ENCODE measurements at regions of chr2 and their contacts with region 1.

Region 1: DNA sequence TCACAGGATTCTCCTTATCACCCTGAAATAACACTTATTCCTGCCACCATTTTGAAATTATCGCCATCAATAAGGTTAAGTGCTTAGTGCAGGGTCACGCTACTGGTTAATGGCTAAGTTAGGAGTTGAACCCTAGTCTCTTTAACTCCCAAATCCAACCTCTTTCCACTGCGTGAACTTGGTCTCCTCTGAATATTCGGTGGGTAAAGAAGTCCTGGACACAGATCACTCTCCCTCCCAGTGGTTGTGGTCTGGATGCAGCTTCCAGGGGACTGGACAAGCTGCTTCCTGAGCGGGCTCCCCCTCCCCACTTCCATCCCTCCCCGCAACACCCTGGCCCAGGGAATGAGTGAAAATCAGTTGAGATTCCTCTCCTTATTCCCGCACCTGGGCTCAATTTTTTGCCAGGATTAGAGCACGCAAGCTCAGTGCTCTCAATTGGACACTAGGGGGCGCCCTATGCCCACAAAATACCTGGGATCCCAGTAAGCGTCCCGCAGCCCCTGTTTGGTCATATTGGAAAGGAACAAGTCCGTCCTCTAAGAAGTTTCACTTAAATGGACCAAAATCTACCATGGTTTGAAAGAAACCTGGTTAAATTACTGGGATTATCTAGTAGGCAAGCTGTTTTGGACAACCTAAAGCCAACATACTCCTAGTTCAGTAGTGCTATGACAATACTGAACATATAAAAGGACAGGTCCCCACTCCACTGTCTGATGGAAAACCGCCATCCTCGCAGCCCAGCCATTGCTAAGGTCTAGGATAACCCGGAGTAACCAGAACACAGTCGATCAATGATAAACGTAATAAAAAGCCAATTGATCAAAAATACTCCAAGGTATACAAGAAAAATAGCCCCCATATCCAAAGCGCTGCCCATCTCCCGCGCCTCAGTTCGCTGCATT is 40.4 kb downstream of the DHRS9 start:
- DNase-seq: peak; percentile 85
- H3K4me3 Mint-ChIP-seq: no peak overlapping the region
- H3K27ac Mint-ChIP-seq: no peak overlapping the region
- H3K4me1 Mint-ChIP-seq: peaks cover 19% of the 10 kb centered on the region
- H3K27me3 Mint-ChIP-seq: no peaks in the 10 kb centered on the region
- CTCF ChIP-seq: peak; percentile 88

Region 2: GRCh38 chr2:168976034-168976654 is 133.6 kb before region 1 on chr2:
- CTCF ChIA-PET with region 1: no interaction called
- intact Hi-C with region 1: no loop called
- DNase-seq: no peak
- H3K4me3 Mint-ChIP-seq: no peak overlapping the region
- H3K27ac Mint-ChIP-seq: peak overlapping the region; percentile 2
- H3K4me1 Mint-ChIP-seq: peaks cover 34% of the 10 kb centered on the region
- H3K27me3 Mint-ChIP-seq: no peaks in the 10 kb centered on the region
- CTCF ChIP-seq: no peak

Region 3: GRCh38 chr2:169131587-169132512 is 22.1 kb after region 1 on chr2:
- CTCF ChIA-PET with region 1: interaction called, 10 read pairs
- intact Hi-C with region 1: loop called (anchors 2 kb)
- DNase-seq: peak; percentile 34
- H3K4me3 Mint-ChIP-seq: no peak overlapping the region
- H3K27ac Mint-ChIP-seq: no peak overlapping the region
- H3K4me1 Mint-ChIP-seq: no peaks in the 10 kb centered on the region
- H3K27me3 Mint-ChIP-seq: no peaks in the 10 kb centered on the region
- CTCF ChIP-seq: peak; percentile 74

Region 4: GRCh38 chr2:169221745-169222369 is 112.1 kb after region 1 on chr2:
- CTCF ChIA-PET with region 1: interaction called, 12 read pairs
- intact Hi-C with region 1: loop called (anchors 2 kb)
- DNase-seq: no peak
- H3K4me3 Mint-ChIP-seq: no peak overlapping the region
- H3K27ac Mint-ChIP-seq: no peak overlapping the region
- H3K4me1 Mint-ChIP-seq: no peaks in the 10 kb centered on the region
- H3K27me3 Mint-ChIP-seq: no peaks in the 10 kb centered on the region
- CTCF ChIP-seq: peak; percentile 23

Region 5: DNA sequence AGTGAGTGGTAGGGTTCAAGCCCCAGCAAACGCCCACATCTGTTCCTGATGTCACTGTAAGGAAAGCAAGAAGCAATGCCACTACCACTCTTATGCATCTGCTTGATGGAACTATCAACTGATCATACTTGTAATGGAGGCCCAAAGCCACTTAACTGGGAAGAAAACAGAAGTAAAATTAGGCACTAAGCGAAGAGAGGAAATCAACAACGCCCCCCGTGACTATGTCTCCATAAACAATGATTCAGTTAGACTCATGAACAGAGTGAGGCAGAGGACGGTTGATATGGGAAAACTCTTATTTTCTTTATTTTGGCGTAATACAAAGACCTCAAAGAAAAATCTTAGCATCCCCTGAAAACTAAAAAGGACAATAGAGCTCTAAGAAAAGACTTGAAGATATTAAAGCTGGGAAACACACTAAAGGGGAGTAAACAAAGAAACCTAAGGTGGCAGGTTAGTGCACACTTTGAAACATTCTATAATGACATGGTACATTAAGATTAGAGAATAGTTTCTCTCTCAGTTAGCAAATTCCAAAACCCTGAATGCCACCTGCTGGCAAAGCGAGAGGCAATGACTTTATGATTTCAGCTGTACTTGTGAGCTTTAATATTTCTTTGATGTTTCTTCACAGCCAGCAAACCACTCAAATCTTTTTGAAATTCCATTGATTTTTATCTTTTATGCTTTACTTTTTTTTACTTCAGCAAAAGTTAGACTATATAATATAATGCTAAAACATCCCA is 166.1 kb after region 1 on chr2:
- CTCF ChIA-PET with region 1: interaction called, 16 read pairs
- intact Hi-C with region 1: loop called (anchors 10 kb)
- DNase-seq: peak; percentile 32
- H3K4me3 Mint-ChIP-seq: no peak overlapping the region
- H3K27ac Mint-ChIP-seq: no peak overlapping the region
- H3K4me1 Mint-ChIP-seq: no peaks in the 10 kb centered on the region
- H3K27me3 Mint-ChIP-seq: peaks cover 20% of the 10 kb centered on the region
- CTCF ChIP-seq: no peak

Region 6: DNA sequence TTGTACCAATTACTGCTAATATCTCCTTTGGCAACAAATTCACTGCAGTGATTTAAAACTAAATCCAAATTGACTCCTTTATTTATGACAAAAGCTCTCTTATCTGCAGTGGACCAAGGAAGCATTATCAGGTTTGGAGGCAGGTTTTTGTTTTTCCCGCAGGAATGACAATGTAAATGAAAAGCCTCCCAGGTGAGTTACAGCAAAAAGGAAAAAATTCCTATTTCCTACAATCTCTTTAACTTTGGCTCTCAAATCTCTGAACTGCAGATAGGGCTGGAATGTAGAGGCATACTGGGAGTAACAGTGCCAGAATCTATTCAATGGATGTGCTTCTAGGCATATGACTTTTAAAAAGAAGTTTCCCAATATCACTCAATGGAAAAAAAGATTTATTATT is 281.5 kb after region 1 on chr2:
- CTCF ChIA-PET with region 1: no interaction called
- intact Hi-C with region 1: loop called (anchors 2 kb)
- DNase-seq: no peak
- H3K4me3 Mint-ChIP-seq: no peak overlapping the region
- H3K27ac Mint-ChIP-seq: no peak overlapping the region
- H3K4me1 Mint-ChIP-seq: no peaks in the 10 kb centered on the region
- H3K27me3 Mint-ChIP-seq: peaks cover 77% of the 10 kb centered on the region
- CTCF ChIP-seq: no peak

Region 7: DNA sequence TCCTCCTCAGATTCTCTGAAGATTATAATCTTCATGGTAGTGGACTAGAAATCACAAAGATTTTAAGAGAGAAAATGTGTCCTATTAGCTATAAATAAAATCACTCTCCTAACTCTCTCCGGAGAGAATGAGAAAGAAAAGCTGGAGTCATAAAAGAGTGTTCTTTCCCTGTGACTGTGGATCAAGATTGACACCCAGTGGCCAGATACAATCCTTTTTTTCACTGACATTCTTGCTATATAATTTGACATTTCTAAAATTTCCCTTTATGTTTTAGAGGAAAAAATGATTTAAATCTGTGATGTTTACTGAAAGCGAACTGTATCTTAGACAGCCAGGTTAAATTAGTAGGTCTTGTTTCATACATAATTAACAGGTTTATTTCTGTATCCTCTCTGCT is 287.9 kb after region 1 on chr2:
- CTCF ChIA-PET with region 1: interaction called, 4 read pairs
- intact Hi-C with region 1: loop called (anchors 1 kb)
- DNase-seq: no peak
- H3K4me3 Mint-ChIP-seq: no peak overlapping the region
- H3K27ac Mint-ChIP-seq: no peak overlapping the region
- H3K4me1 Mint-ChIP-seq: no peaks in the 10 kb centered on the region
- H3K27me3 Mint-ChIP-seq: peaks cover 63% of the 10 kb centered on the region
- CTCF ChIP-seq: no peak